IMR-90 (cell line): ENCODE measurements at regions of chr15 and their contacts with region 1.

Region 1: DNA sequence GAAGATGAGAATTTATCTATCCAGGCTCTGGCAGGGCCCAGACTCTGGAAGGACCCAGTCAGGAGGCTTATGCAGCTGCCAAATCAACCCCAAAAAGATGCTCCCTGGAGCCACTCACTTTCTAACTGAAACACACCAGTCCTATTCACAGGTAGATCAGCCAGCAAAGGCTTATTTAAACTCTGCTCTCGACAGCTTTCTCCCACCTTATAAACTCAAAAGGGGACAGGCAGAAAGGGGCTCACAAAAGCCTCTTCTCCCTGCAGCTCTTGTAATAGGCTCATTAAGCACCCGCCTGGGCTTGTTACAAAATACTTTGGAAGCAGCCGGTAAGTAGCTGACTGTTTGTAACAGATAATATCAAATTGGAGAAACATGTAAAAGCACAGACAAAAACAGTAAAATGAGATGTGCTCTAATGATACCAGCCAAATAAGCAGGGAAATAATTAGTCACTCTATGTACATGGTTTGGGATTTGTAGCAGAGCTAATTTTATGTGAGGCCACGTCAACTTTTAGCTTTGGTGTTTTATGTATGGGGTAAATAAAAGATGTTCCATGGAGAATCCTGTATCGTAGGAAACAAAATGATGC is 213.8 kb downstream of the NR2F2 start:
- DNase-seq: no peak
- ATAC-seq: no peak
- H3K4me3 ChIP-seq: no peak overlapping the region
- H3K27ac ChIP-seq: no peak overlapping the region
- H3K4me1 ChIP-seq: no peaks in the 10 kb centered on the region
- H3K27me3 ChIP-seq: no peaks in the 10 kb centered on the region
- CTCF ChIP-seq: no peak
- POLR2A ChIP-seq: no peak
- RAD21 ChIP-seq: no peak

Region 2: GRCh38 chr15:94561036-94561689 is 1983.1 kb before region 1 on chr15:
- CTCF ChIA-PET with region 1: no interaction called
- POLR2A ChIA-PET with region 1: no interaction called
- dilution Hi-C with region 1: no loop called
- in situ Hi-C with region 1: no loop called
- intact Hi-C with region 1: loop called (anchors 5 kb)
- DNase-seq: no peak
- ATAC-seq: no peak
- H3K4me3 ChIP-seq: no peak overlapping the region
- H3K27ac ChIP-seq: no peak overlapping the region
- H3K4me1 ChIP-seq: no peaks in the 10 kb centered on the region
- H3K27me3 ChIP-seq: no peaks in the 10 kb centered on the region
- CTCF ChIP-seq: no peak
- POLR2A ChIP-seq: no peak
- RAD21 ChIP-seq: no peak

Region 3: DNA sequence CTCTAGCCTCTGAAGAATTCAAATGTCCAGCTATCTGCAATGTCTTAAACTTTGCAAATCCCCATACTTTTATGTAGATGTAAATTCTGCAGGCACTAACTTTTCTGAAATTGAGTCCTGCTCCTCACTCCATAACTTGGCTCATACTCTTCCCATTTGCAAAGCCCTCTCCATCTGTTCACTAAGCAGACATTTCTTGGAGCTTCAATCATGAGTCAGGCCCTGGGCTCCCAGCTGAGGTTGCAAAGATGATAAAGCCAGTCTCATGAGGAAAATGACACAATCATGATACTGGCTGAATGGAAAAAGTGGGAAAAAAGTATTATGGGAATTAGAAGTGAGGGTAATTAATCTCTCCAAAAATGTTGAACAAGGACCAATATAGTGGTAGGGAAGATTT is 293.8 kb after region 1 on chr15:
- CTCF ChIA-PET with region 1: no interaction called
- POLR2A ChIA-PET with region 1: no interaction called
- dilution Hi-C with region 1: no loop called
- in situ Hi-C with region 1: no loop called
- intact Hi-C with region 1: no loop called
- DNase-seq: no peak
- ATAC-seq: no peak
- H3K4me3 ChIP-seq: no peak overlapping the region
- H3K27ac ChIP-seq: no peak overlapping the region
- H3K4me1 ChIP-seq: no peaks in the 10 kb centered on the region
- H3K27me3 ChIP-seq: no peaks in the 10 kb centered on the region
- CTCF ChIP-seq: no peak
- POLR2A ChIP-seq: no peak
- RAD21 ChIP-seq: no peak